PC-3 (cell line): ENCODE measurements at regions of chrX and their contacts with region 1.

Region 1: DNA sequence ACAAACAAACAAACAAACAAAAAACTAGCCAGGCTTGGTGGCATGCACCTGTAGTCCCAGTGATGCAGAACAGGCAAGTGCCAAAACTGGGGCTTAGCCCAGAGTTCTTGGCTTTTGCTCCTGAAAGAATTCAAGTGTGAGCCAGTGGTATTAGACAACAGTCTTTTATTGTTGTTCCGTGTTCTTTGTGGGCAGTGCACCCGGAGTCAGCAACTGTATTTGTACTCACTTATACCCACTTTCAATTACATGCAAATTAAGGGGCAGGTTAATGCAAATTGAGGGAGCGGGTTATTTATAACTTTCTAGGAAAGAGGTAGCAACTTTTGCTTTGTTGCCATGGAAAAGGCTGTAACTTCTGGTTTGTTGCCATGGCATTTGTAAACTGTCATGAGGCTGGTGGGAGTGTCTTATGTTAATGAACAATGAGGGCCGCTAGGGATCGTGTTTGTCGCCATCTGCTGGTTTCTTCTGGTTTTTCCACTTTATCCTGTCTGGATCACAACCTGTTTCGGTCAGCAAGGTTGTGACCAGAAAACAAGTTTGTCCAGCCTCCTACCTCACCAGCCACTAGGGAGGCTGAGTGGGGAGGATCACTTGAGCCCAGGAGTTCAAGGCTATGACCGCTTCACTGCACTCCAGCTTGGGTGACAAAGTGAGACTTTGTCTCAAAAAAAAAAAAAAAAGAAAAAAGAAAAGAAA is 88.8 kb upstream of the ESX1 start:
- DNase-seq: peak; percentile 94
- ATAC-seq: peak; percentile 93
- H3K4me3 ChIP-seq: no peak overlapping the region
- H3K27ac ChIP-seq: no peak overlapping the region
- H3K4me1 ChIP-seq: peaks cover 17% of the 10 kb centered on the region; the same call in 1 of the 2 replicates
- H3K27me3 ChIP-seq: no peaks in the 10 kb centered on the region
- CTCF ChIP-seq: peak; percentile 74

Region 2: DNA sequence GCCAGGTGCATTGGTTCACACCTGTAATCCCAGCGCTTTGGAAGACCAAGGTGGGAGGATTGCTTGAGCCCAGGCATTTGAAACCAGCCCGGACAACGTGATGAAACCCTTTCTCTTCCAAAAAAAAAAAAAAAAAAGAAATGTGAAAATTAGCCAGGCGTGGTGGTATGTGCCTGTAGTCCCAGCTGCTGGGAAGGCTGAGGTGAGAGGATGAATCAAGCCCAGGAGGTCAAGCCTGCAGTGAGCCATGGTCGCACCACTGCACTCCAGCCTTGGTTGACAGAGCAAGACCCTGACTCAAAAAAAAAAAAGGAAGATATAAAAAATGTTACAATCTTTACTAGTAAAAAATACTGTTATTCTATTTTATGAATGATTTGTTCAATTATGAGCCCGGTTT is 171.5 kb before region 1 on chrX:
- CTCF ChIA-PET with region 1: no interaction called
- POLR2A ChIA-PET with region 1: interaction called, 10 read pairs
- intact Hi-C with region 1: no loop called
- DNase-seq: no peak
- ATAC-seq: no peak
- H3K4me3 ChIP-seq: no peak overlapping the region
- H3K27ac ChIP-seq: no peak overlapping the region
- H3K4me1 ChIP-seq: peaks cover 10% of the 10 kb centered on the region
- H3K27me3 ChIP-seq: no peaks in the 10 kb centered on the region
- CTCF ChIP-seq: no peak

Region 3: GRCh38 chrX:104195489-104196084 is 148.0 kb before region 1 on chrX:
- CTCF ChIA-PET with region 1: no interaction called
- POLR2A ChIA-PET with region 1: no interaction called
- intact Hi-C with region 1: loop called (anchors 1 kb)
- DNase-seq: peak; percentile 70
- ATAC-seq: peak; percentile 56; the same call in 1 of the 2 replicates
- H3K4me3 ChIP-seq: no peak overlapping the region
- H3K27ac ChIP-seq: no peak overlapping the region
- H3K4me1 ChIP-seq: no peaks in the 10 kb centered on the region
- H3K27me3 ChIP-seq: no peaks in the 10 kb centered on the region
- CTCF ChIP-seq: peak; percentile 74